Ovary (tissue), 10 donors: ENCODE measurements at regions of chr16 and their contacts with region 1.

Region 1: GRCh38 chr16:83826146-83826913 is 18.6 kb downstream of the HSBP1 start:
- DNase-seq: peak; percentile 76 to 93 (median 89)
- H3K4me3 ChIP-seq: no peak overlapping the region
- H3K27ac ChIP-seq: no peak overlapping the region
- H3K4me1 ChIP-seq: no peaks in the 10 kb centered on the region
- H3K27me3 ChIP-seq: no peaks in the 10 kb centered on the region
- CTCF ChIP-seq: peak; percentile 77 to 93 (median 89)
- EP300 ChIP-seq: no peak
- POLR2A ChIP-seq: no peak

Region 2: GRCh38 chr16:83878838-83879237 is 52.5 kb after region 1 on chr16:
- intact Hi-C with region 1: loop called in 3 of 4 experiments (anchors 5 kb)
- DNase-seq: no peak
- H3K4me3 ChIP-seq: no peak overlapping the region
- H3K27ac ChIP-seq: no peak overlapping the region
- H3K4me1 ChIP-seq: no peaks in the 10 kb centered on the region
- H3K27me3 ChIP-seq: no peaks in the 10 kb centered on the region
- CTCF ChIP-seq: peak in 2 of 3 donors; percentile 30 to 66
- EP300 ChIP-seq: no peak
- POLR2A ChIP-seq: no peak

Region 3: DNA sequence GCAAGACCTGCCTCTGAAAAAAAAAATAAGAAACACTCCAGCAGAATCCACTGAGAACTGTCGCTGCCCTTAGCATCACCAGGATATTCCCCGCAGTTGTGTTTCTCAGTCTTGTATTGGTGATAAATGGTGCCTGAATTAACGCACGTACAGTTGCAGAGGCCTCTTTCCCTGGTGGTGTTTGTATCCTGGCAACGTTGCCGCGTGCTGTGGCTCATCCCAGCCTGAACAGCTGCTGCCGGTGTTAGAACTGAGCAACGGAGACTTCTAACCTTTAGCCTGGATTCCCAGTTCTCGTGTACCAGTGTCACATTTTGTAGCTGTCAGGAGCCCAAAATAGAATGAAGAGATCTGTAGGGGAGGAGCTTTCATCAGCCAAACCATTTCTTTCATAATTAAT is 77.4 kb after region 1 on chr16:
- intact Hi-C with region 1: loop called in 1 of 4 experiments (anchors 10 kb)
- DNase-seq: peak; percentile 57 to 78 (median 62)
- H3K4me3 ChIP-seq: no peak overlapping the region
- H3K27ac ChIP-seq: no peak overlapping the region
- H3K4me1 ChIP-seq: peaks cover 14% of the 10 kb centered on the region
- H3K27me3 ChIP-seq: no peaks in the 10 kb centered on the region
- CTCF ChIP-seq: no peak
- EP300 ChIP-seq: no peak
- POLR2A ChIP-seq: no peak

Region 4: GRCh38 chr16:84062734-84063640 is 236.7 kb after region 1 on chr16:
- intact Hi-C with region 1: loop called in 1 of 4 experiments (anchors 10 kb)
- DNase-seq: peak; percentile 53 to 81 (median 71)
- H3K4me3 ChIP-seq: no peak overlapping the region
- H3K27ac ChIP-seq: no peak overlapping the region
- H3K4me1 ChIP-seq: no peaks in the 10 kb centered on the region
- H3K27me3 ChIP-seq: no peaks in the 10 kb centered on the region
- CTCF ChIP-seq: peak; percentile 41 to 59 (median 51)
- EP300 ChIP-seq: no peak
- POLR2A ChIP-seq: no peak